Ovary (tissue), 10 donors: ENCODE measurements at regions of chr12 and their contacts with region 1.

Region 1: DNA sequence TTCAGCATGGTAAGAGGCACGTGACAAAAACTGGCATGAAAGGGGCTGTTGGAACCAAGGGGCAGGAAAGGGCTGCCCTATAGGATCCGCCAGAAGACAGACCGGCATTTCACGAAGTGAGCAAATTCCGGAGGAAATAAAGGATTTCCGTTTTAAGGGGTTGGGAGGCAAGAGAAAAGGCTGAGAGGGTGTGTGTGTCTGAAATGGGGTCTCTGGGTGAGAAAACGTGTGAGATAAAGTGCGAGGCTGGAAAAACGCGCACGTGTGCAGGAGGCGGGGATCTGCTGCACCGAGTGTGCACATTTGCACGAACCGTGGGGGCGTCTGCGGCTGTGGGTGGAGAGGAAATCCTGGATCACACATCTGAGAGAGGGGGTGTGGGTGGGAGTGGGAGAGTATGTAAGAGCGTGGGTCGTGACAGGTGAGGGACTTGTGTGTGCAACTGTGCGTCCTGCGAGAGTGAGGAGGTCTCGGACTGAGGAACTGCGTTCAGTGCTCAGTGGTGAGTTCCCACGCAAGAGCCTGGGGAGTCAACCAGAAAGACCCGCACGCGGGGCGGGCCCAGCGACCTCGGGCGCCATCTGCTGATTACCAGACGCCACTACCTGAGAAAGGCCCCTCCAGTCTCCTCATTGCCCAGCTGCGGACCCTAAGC is 37.0 kb upstream of the P2RX7 start:
- DNase-seq: peak; percentile 62 to 82 (median 74)
- H3K4me3 ChIP-seq: peak overlapping the region; percentile 8
- H3K27ac ChIP-seq: no peak overlapping the region
- H3K4me1 ChIP-seq: peaks cover 3% of the 10 kb centered on the region
- H3K27me3 ChIP-seq: no peaks in the 10 kb centered on the region
- CTCF ChIP-seq: peak; percentile 58 to 81 (median 67)
- EP300 ChIP-seq: no peak
- POLR2A ChIP-seq: no peak

Region 2: DNA sequence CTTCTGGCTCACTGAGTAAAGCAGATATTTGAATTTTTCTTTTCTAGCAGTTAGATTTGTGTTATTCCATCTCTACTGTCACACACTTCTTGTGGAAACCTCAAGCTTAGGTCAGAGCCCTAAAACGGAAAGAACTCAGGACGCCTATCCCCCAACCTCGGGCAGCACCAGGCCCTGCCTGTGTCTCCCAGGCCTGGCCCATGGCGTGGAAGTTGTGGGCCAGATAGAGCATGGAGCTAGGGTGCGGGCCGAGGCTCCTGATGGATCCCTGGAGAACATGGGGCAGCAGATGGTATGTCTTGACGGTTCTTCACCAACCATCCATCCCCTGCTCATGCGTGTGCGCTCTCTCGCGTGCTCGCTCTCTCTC is 134.9 kb after region 1 on chr12:
- intact Hi-C with region 1: loop called in 1 of 4 experiments (anchors 5 kb)
- DNase-seq: no peak
- H3K4me3 ChIP-seq: no peak overlapping the region
- H3K27ac ChIP-seq: no peak overlapping the region
- H3K4me1 ChIP-seq: no peaks in the 10 kb centered on the region
- H3K27me3 ChIP-seq: no peaks in the 10 kb centered on the region
- CTCF ChIP-seq: no peak
- EP300 ChIP-seq: no peak
- POLR2A ChIP-seq: no peak